B cell (primary cell): ENCODE measurements at regions of chr4 and their contacts with region 1.

Region 1: DNA sequence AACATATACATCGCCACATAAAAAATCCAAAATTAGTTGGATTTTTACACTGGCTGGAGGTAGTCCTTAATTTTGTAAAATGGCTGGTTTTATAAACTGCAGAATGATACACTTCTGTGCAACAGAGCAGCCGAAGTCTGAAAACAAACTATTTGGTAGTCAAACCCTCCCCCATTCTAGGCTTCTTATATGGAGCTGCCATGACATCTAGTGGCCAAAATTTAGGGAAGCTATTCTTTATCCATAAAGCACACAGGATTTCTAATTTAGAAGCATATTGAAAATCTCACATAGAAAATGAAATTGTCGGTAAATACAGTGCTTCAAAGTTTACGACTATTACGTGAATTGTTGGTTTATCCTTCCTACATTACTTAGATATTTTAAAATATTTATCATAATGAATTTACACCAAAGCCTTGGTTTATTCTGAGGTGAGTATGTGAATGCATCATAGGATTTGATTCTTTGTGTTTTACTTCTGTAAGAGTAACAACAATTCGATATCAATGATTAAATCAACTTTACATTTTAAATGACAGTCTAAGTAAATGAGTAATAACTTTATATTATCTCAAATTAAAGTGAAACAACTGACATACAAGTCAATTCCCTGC is 113.4 kb upstream of the FAM241A start:
- DNase-seq: peak; percentile 30
- ATAC-seq: no peak
- H3K4me3 ChIP-seq: no peak overlapping the region
- H3K4me3 Mint-ChIP-seq: no peak overlapping the region
- H3K27ac ChIP-seq: no peak overlapping the region
- H3K27ac Mint-ChIP-seq: no peak overlapping the region
- H3K4me1 ChIP-seq: no peaks in the 10 kb centered on the region
- H3K4me1 Mint-ChIP-seq: no peaks in the 10 kb centered on the region
- H3K27me3 ChIP-seq: peaks cover 0 to 20% (median 5%) of the 10 kb centered on the region in 4 experiments
- H3K27me3 Mint-ChIP-seq: peaks cover 30% of the 10 kb centered on the region
- CTCF ChIP-seq: peak; percentile 51

Region 2: GRCh38 chr4:111641955-111642579 is 389.8 kb before region 1 on chr4:
- CTCF ChIA-PET with region 1: interaction called, 6 read pairs
- POLR2A ChIA-PET with region 1: no interaction called
- intact Hi-C with region 1: loop called (anchors 5 kb)
- DNase-seq: peak; percentile 50
- ATAC-seq: no peak
- H3K4me3 ChIP-seq: no peak overlapping the region
- H3K4me3 Mint-ChIP-seq: no peak overlapping the region
- H3K27ac ChIP-seq: no peak overlapping the region
- H3K27ac Mint-ChIP-seq: no peak overlapping the region
- H3K4me1 ChIP-seq: no peaks in the 10 kb centered on the region
- H3K4me1 Mint-ChIP-seq: no peaks in the 10 kb centered on the region
- H3K27me3 ChIP-seq: no peaks in the 10 kb centered on the region
- H3K27me3 Mint-ChIP-seq: peaks cover 11% of the 10 kb centered on the region
- CTCF ChIP-seq: peak; percentile 54

Region 3: DNA sequence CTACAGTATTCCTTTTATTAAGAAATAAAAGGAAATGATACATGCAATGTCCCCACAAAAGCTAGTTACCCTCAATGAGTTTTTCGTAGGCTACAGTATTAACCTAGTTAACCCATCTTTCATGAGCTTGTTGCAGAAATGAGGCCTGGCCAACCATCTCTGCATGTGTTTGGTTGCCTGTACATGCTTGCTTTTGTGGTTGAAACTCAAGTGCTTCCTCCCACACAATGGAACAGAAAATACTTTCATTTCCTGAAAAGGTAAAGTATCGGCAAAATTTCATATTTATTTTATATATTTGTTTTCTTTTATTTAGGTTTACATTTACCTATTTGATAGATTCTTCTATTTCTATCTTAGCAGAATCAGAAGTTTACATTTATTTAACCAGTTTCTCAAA is 101.2 kb before region 1 on chr4:
- CTCF ChIA-PET with region 1: no interaction called
- POLR2A ChIA-PET with region 1: no interaction called
- intact Hi-C with region 1: no loop called
- DNase-seq: peak; percentile 46
- ATAC-seq: peak; percentile 63
- H3K4me3 ChIP-seq: no peak overlapping the region
- H3K4me3 Mint-ChIP-seq: peak overlapping the region; percentile 37
- H3K27ac ChIP-seq: no peak overlapping the region
- H3K27ac Mint-ChIP-seq: no peak overlapping the region
- H3K4me1 ChIP-seq: peaks cover 4 to 11% of the 10 kb centered on the region in 2 donors
- H3K4me1 Mint-ChIP-seq: peaks cover 28% of the 10 kb centered on the region
- H3K27me3 ChIP-seq: no peaks in the 10 kb centered on the region
- H3K27me3 Mint-ChIP-seq: peaks cover 11% of the 10 kb centered on the region
- CTCF ChIP-seq: no peak

Region 4: GRCh38 chr4:111943795-111944203 is 88.0 kb before region 1 on chr4:
- CTCF ChIA-PET with region 1: interaction called, 13 read pairs
- POLR2A ChIA-PET with region 1: no interaction called
- intact Hi-C with region 1: no loop called
- DNase-seq: peak; percentile 9
- ATAC-seq: no peak
- H3K4me3 ChIP-seq: no peak overlapping the region
- H3K4me3 Mint-ChIP-seq: no peak overlapping the region
- H3K27ac ChIP-seq: no peak overlapping the region
- H3K27ac Mint-ChIP-seq: no peak overlapping the region
- H3K4me1 ChIP-seq: no peaks in the 10 kb centered on the region
- H3K4me1 Mint-ChIP-seq: no peaks in the 10 kb centered on the region
- H3K27me3 ChIP-seq: no peaks in the 10 kb centered on the region
- H3K27me3 Mint-ChIP-seq: peaks cover 6% of the 10 kb centered on the region
- CTCF ChIP-seq: no peak

Region 5: GRCh38 chr4:113761620-113762185 is 1729.9 kb after region 1 on chr4 and contains the start of gene CAMK2D:
- CTCF ChIA-PET with region 1: no interaction called
- POLR2A ChIA-PET with region 1: no interaction called
- intact Hi-C with region 1: no loop called
- DNase-seq: peak; percentile 91
- ATAC-seq: peak; percentile 46
- H3K4me3 ChIP-seq: peak within 1 kb of the TSS; percentile 91 to 96 (median 93)
- H3K4me3 Mint-ChIP-seq: peak within 1 kb of the TSS; percentile 94
- H3K27ac ChIP-seq: peak within 1 kb of the TSS; percentile 98 to 99
- H3K27ac Mint-ChIP-seq: peak within 1 kb of the TSS; percentile 98
- H3K4me1 ChIP-seq: peaks cover 16 to 27% of the 10 kb centered on the region in 2 donors
- H3K4me1 Mint-ChIP-seq: peaks cover 36% of the 10 kb centered on the region
- H3K27me3 ChIP-seq: no peaks in the 10 kb centered on the region
- H3K27me3 Mint-ChIP-seq: no peaks in the 10 kb centered on the region
- CTCF ChIP-seq: peak; percentile 34
- total RNA-seq, gene CAMK2D: 55.9 and 57.0 TPM in 2 replicates